A673 (cell line): ENCODE measurements at regions of chr1 and their contacts with region 1.

Region 1: GRCh38 chr1:29478151-29478791 is 241.9 kb downstream of the PTPRU start:
- DNase-seq: no peak
- H3K4me3 ChIP-seq: no peak overlapping the region
- H3K27ac ChIP-seq: no peak overlapping the region
- H3K4me1 ChIP-seq: no peaks in the 10 kb centered on the region
- H3K27me3 ChIP-seq: peaks cover 82% of the 10 kb centered on the region
- CTCF ChIP-seq: no peak

Region 2: DNA sequence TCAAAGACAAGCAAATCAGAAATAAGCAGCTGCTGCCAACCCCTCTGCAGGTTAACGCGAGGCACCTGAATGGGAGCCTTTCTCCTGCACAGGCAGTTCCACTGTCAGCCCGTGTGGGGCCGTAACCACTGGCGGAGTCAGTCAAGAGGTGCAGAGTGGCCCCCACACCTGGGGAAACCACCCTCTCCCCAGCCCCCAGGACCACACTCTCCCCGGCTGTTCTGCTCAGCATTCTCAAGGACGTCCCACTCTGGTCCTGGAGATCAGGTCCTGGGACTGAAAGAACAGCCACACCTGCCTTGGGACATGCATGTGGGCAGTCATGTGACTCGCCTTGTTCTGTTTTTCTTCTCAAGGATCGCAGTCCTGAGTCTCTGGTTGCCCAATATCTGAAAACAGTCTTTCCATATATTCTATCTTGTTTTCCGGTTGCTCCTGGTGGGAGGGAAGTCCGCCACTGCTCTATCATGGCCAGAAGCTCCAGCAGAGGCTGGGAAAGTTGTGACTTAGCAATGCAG is 10.6 kb after region 1 on chr1:
- CTCF ChIA-PET with region 1: no interaction called
- POLR2A ChIA-PET with region 1: interaction called, 11 read pairs
- intact Hi-C with region 1: no loop called
- DNase-seq: no peak
- H3K4me3 ChIP-seq: no peak overlapping the region
- H3K27ac ChIP-seq: no peak overlapping the region
- H3K4me1 ChIP-seq: no peaks in the 10 kb centered on the region
- H3K27me3 ChIP-seq: peaks cover 27% of the 10 kb centered on the region
- CTCF ChIP-seq: no peak

Region 3: DNA sequence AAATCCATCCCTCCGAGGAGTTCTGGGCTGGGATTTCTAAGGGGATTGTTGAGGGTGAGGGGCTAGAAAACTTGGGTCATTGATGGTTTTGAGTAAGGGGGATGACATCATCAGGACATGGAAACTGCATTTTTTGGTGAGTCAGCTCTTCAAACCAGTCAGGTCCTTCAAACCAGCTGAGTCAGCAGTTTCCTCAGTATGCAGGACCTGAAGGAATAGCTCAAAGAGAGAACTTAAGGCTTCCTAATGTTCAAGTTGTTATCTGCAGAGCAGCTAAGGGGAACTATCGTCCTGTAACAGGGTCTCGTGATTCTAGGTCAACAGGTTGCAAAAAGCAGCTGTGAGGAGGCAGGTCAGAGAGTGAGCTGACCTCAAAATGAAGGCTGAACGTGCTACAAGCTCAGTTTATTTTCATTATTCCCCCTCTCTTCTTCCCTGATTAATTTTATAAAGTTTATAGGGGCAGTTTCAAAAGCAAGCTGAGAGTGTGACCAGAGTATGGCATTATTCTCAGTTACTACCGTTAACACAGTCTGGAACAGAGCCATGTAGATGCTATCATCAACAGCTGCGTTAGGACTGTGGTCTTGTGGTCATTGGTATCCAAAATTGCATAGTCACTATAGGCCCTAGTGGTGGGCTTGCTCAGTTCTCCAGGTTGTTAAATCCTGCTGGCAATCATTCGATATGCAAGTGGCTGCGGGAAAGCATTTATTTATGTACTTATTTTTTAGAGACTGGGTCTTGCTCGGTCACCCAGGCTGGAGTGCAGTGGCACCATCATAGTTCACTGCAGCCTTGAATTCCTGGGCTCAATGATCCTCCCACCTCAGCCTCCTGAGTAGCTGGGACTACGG is 1441.0 kb after region 1 on chr1:
- CTCF ChIA-PET with region 1: no interaction called
- POLR2A ChIA-PET with region 1: no interaction called
- intact Hi-C with region 1: no loop called
- DNase-seq: peak; percentile 55
- H3K4me3 ChIP-seq: no peak overlapping the region
- H3K27ac ChIP-seq: no peak overlapping the region
- H3K4me1 ChIP-seq: no peaks in the 10 kb centered on the region
- H3K27me3 ChIP-seq: no peaks in the 10 kb centered on the region
- CTCF ChIP-seq: no peak